WTC11 (cell line): ENCODE measurements at regions of chr11 and their contacts with region 1.

Region 1: GRCh38 chr11:100340416-100341323 is 346.4 kb upstream of the ARHGAP42 start:
- DNase-seq: no peak
- ATAC-seq: peak; percentile 77
- H3K4me3 Mint-ChIP-seq: no peak overlapping the region
- H3K27ac Mint-ChIP-seq: no peak overlapping the region
- H3K4me1 Mint-ChIP-seq: peaks cover 14% of the 10 kb centered on the region
- H3K27me3 Mint-ChIP-seq: no peaks in the 10 kb centered on the region
- CTCF ChIP-seq: no peak

Region 2: DNA sequence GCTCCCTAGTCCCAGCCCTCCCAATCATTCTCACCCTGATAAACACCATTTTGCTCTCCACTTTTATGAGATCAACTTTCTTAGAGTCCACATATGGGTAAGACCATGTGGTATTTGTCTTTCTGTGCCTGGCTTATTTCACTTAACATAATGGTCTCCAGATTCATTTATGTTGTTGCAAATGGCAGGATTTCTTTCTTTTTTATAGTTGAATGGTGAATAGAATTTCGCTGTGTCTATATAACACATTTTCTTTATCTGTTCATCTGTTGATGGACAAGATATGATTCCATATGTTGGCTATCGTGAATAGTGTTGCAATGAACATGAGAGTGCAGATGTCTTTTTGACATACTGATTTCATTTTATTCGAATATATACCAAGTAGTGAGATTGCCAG is 21.0 kb before region 1 on chr11:
- CTCF ChIA-PET with region 1: no interaction called
- POLR2A ChIA-PET with region 1: no interaction called
- DNase-seq: no peak
- ATAC-seq: no peak
- H3K4me3 Mint-ChIP-seq: no peak overlapping the region
- H3K27ac Mint-ChIP-seq: no peak overlapping the region
- H3K4me1 Mint-ChIP-seq: no peaks in the 10 kb centered on the region
- H3K27me3 Mint-ChIP-seq: no peaks in the 10 kb centered on the region
- CTCF ChIP-seq: no peak

Region 3: DNA sequence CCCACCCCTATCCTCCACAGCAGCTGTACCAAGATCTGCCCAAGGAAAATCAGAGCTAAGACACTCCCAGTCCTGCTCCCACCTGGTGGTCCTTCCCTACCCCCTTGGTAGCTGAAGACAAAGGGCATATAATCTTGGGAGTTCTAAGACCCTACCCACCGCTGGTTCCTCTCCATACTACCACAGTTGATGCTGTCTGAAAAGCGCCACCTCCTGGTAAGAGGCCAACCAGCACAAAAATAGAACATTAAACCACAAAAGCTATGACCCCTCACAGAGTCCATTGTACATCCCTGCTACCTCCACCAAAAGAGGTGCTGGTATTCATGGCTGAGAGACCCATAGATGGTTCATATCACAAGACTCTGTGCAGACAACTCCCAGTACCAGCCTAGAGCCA is 185.0 kb after region 1 on chr11:
- CTCF ChIA-PET with region 1: interaction called, 10 read pairs
- POLR2A ChIA-PET with region 1: no interaction called
- DNase-seq: peak; percentile 65
- ATAC-seq: peak; percentile 85
- H3K4me3 Mint-ChIP-seq: no peak overlapping the region
- H3K27ac Mint-ChIP-seq: no peak overlapping the region
- H3K4me1 Mint-ChIP-seq: no peaks in the 10 kb centered on the region
- H3K27me3 Mint-ChIP-seq: no peaks in the 10 kb centered on the region; the same call in none of the 2 replicates
- CTCF ChIP-seq: peak; percentile 47; the same call in 1 of the 2 replicates